ENCODE measurements at regions of chr15 and their contacts with region 1.

Region 1: GRCh38 chr15:56732921-56733797 is at the start of gene ZNF280D:
- DNase-seq: peak; percentile 66
- H3K4me3 ChIP-seq: peak within 1 kb of the TSS; percentile 73
- H3K27ac ChIP-seq: peak within 1 kb of the TSS; percentile 88
- H3K27me3 ChIP-seq: no peaks in the 10 kb centered on the region
- CTCF ChIP-seq: no peak
- polyA plus RNA-seq, gene ZNF280D: 12.9 and 17.6 TPM in 2 replicates

Region 2: DNA sequence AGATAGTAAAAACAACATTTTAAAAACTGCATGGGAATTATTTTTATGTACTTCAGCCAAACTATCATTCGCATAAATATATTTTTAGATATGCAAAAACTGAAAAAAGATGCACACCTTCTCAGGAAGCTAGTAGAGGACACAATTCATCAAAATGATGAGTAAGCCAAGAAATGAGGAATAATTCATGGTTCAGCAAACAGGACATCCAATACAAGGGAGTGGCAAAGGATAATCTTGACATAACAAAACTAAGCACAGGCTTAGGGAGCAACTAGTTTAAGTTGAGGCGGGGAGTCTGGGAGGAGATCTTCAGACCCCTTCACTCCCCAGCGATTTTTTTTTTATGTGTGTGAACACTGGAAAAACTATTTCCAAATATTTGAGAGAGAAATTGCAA is 93.5 kb before region 1 on chr15:
- CTCF ChIA-PET with region 1: interaction called, 15 read pairs
- POLR2A ChIA-PET with region 1: no interaction called
- DNase-seq: no peak
- H3K4me3 ChIP-seq: no peak overlapping the region
- H3K27ac ChIP-seq: no peak overlapping the region
- H3K27me3 ChIP-seq: no peaks in the 10 kb centered on the region
- CTCF ChIP-seq: no peak

Region 3: GRCh38 chr15:56683908-56684307 is 49.3 kb before region 1 on chr15:
- CTCF ChIA-PET with region 1: no interaction called
- POLR2A ChIA-PET with region 1: no interaction called
- DNase-seq: no peak
- H3K4me3 ChIP-seq: no peak overlapping the region
- H3K27ac ChIP-seq: no peak overlapping the region
- H3K27me3 ChIP-seq: no peaks in the 10 kb centered on the region
- CTCF ChIP-seq: no peak

Region 4: GRCh38 chr15:56759450-56759845 is 26.3 kb after region 1 on chr15:
- CTCF ChIA-PET with region 1: no interaction called
- POLR2A ChIA-PET with region 1: interaction called, 16 read pairs
- DNase-seq: peak; percentile 91
- H3K4me3 ChIP-seq: no peak overlapping the region
- H3K27ac ChIP-seq: peak overlapping the region; percentile 54
- H3K27me3 ChIP-seq: no peaks in the 10 kb centered on the region
- CTCF ChIP-seq: no peak

Measured in AG04450 (cell line).